Astrocyte of the cerebellum (primary cell): ENCODE measurements at regions of chr22 and their contacts with region 1.

Region 1: DNA sequence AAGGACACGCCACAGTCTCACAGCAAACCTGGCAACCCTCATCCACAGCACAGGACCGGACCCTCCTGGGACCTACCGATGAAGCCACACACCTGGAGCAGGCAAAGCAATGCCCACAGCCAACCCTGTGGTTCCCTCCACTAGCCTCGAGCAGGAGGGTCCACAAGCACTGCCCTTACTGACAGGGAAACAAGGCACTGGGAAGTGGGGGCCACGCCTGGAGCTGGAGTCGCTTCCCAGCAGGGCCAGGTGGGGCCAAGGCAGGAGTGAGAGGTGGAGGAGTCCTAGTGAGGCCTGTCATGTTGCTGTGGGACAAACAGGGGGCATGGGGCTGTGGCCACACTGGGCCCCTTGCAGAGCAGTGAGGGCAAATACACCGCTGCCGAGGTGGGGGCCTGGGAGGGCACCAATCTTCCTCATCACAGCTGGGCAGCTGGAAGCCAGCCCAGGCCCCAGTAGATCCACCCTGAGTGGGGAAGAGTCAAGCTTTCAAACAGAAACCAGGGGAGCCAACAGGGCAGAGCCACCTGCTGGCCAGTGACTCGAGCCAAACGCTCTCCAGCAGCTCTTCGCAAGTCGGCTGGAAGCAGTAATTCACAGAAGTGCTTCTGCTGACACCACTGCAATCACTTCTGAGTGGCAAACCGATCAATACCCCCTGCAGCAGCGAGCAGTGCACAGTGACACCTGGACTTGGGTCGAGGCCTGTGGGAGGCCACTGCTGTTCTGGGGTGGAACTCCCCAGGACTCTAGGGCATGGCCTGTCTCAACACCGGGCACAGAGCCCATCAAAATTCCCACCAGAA is 13.7 kb downstream of the SULT4A1 start:
- DNase-seq: no peak
- H3K4me3 ChIP-seq: no peak overlapping the region
- CTCF ChIP-seq: peak; percentile 65

Region 2: DNA sequence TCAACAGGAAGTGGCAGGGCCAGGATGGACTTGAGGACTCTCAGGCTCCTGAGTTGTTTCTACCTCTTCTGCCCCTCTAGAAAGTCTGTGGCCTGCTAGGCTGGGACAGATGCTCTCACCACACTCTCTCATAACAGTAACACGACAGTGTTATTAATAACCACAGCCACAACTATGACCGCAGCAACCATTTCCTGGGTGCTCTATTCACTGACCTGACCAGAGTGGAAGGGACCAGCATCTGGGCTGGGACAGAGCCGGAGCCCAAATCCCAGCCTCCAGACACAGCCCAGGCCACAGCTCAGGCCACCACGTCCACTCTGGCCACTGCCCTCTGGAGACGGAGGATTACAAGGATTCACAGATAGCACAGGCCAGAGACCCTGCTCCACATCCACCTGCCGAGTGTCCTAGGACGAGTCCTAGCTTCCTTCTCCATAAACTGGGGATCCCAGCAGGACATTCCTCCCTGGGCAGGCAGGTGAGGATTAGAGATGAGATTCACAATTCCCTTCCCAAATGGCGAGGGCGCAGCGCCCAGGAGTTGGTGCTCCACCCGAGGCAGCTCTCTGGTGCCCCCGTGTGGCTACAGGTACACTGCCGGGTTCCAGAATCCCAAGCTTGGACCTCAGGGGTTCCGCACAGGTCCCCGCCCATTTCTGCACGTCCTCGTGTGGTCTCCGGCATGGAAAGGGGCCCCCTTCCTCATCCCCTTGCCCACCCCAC is 36.2 kb after region 1 on chr22:
- in situ Hi-C with region 1: loop called (anchors 5 kb)
- DNase-seq: no peak
- H3K4me3 ChIP-seq: no peak overlapping the region
- CTCF ChIP-seq: peak; percentile 95